ENCODE measurements at regions of chr3 and their contacts with region 1.

Region 1: GRCh38 chr3:188524052-188524451 is 370.1 kb downstream of the LPP start:
- DNase-seq: no peak
- ATAC-seq: no peak
- H3K4me3 ChIP-seq: no peak overlapping the region
- H3K27ac ChIP-seq: no peak overlapping the region
- H3K4me1 ChIP-seq: no peaks in the 10 kb centered on the region
- H3K27me3 ChIP-seq: no peaks in the 10 kb centered on the region
- CTCF ChIP-seq: no peak

Region 2: DNA sequence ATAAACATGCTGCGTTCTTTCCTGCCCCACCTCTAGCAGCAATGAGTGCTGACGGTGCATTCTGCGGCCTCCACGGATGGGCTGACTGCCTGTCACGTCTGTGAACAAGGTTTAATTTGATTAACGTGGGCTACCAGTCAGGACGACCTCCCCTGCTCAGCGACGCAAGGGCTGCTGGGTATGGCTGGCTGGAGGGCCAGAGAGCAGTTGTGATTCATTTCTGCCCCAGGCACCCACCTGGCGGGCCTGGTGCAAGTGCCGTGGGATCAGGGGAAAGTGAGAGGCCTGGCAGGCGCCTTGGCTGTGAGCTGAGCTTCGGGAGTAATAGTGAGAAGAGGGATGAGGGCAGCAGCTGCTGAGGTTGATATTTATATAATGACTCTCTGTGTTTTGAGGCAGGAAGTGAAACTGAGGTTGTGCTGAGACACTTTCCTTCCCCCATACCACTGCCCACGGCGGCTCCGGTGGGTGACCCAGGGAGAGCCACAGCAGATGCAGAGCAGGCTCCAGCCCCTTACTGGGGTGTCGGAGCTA is 588.4 kb before region 1 on chr3:
- CTCF ChIA-PET with region 1: no interaction called
- POLR2A ChIA-PET with region 1: no interaction called
- in situ Hi-C with region 1: no loop called
- intact Hi-C with region 1: no loop called
- DNase-seq: no peak
- ATAC-seq: no peak
- H3K4me3 ChIP-seq: no peak overlapping the region
- H3K27ac ChIP-seq: no peak overlapping the region
- H3K4me1 ChIP-seq: no peaks in the 10 kb centered on the region
- H3K27me3 ChIP-seq: peaks cover 2% of the 10 kb centered on the region; the same call in 1 of the 2 replicates
- CTCF ChIP-seq: no peak

Region 3: GRCh38 chr3:188008582-188009213 is 515.4 kb before region 1 on chr3:
- CTCF ChIA-PET with region 1: interaction called, 10 read pairs
- POLR2A ChIA-PET with region 1: no interaction called
- in situ Hi-C with region 1: no loop called
- intact Hi-C with region 1: no loop called
- DNase-seq: no peak
- ATAC-seq: no peak
- H3K4me3 ChIP-seq: no peak overlapping the region
- H3K27ac ChIP-seq: no peak overlapping the region
- H3K4me1 ChIP-seq: no peaks in the 10 kb centered on the region
- H3K27me3 ChIP-seq: no peaks in the 10 kb centered on the region
- CTCF ChIP-seq: no peak

Region 4: GRCh38 chr3:188400494-188401243 is 123.4 kb before region 1 on chr3:
- CTCF ChIA-PET with region 1: no interaction called
- POLR2A ChIA-PET with region 1: no interaction called
- in situ Hi-C with region 1: no loop called
- intact Hi-C with region 1: no loop called
- DNase-seq: no peak
- ATAC-seq: no peak
- H3K4me3 ChIP-seq: no peak overlapping the region
- H3K27ac ChIP-seq: no peak overlapping the region
- H3K4me1 ChIP-seq: no peaks in the 10 kb centered on the region; the same call in 1 of the 2 replicates
- H3K27me3 ChIP-seq: no peaks in the 10 kb centered on the region
- CTCF ChIP-seq: no peak

Measured in Panc1 (cell line).